MCF 10A (cell line): ENCODE measurements at regions of chr4 and their contacts with region 1.

Region 1: DNA sequence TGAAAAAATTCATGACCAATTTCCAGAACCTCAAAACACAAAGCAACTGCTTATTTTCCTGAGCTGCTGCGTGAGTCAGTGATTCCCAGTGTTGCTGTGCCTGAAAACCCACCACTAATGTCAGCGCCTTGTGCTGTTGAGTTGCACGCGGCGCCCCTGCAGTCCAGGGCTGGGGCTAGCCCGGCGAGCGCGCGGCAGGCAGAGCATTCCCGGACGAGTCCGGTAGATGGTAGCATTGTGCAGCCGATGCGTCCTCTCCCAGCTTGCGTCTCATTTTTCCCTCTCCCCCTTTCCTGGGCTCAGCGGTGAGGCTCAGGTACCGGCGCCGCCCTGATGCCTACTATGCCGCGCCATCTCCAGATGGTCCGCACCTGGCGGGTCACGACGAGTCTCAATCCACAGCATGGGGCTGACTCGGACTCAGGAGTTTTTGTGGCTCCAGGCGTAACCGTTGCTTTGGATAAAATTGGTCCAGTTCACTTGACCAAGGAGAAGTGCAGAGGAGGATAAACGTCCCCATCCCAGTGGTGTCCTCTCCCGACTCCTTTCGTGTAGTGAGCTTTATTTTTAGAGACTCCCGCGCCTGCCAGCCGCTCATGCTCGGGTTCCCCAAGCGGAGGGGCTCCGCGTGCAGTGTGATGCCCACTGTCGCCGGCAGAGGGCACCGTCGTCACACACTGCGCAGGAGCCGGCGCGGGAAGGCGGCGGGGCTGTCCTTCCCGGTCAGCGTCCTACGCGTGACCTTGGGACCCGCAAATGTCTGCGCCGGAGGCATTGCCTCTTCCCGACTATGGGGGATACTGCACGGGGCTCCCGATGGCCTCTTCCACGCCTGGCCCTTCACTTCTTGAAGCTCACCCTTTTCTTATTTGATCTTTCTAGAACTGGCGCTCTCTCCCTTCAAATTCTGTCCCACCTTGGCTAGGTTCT is 53.6 kb upstream of the IGFBP7 start:
- DNase-seq: peak; percentile 86
- H3K4me3 Mint-ChIP-seq: peak overlapping the region; percentile 91
- H3K27ac Mint-ChIP-seq: peak overlapping the region; percentile 82
- H3K4me1 Mint-ChIP-seq: peaks cover 15% of the 10 kb centered on the region
- H3K27me3 Mint-ChIP-seq: no peaks in the 10 kb centered on the region
- CTCF ChIP-seq: peak; percentile 88

Region 2: DNA sequence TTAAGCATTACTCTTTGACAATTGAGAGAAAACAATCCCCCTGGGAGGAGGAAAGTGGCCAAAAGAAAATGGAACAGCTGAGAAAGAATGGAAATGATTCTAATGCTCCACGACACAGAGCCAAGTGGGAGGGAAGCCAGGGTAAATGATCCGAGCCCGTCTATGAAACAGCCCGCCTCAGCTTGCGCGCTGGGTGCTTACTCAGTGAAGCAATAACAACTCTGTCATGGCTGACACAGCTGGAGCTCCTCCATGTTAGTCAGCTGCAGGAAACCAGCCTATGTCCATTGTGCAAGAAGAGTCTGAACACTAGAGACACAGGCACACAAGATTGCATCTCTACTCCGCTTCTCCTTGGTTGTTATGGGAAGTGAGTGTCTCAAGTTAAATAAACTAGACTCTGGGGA is 205.7 kb before region 1 on chr4:
- CTCF ChIA-PET with region 1: no interaction called
- POLR2A ChIA-PET with region 1: no interaction called
- intact Hi-C with region 1: no loop called
- DNase-seq: peak; percentile 93
- H3K4me3 Mint-ChIP-seq: peak overlapping the region; percentile 36
- H3K27ac Mint-ChIP-seq: peak overlapping the region; percentile 50
- H3K4me1 Mint-ChIP-seq: peaks cover 9% of the 10 kb centered on the region
- H3K27me3 Mint-ChIP-seq: no peaks in the 10 kb centered on the region
- CTCF ChIP-seq: no peak

Region 3: GRCh38 chr4:57064811-57065711 is 98.7 kb before region 1 on chr4:
- CTCF ChIA-PET with region 1: interaction called, 14 read pairs
- POLR2A ChIA-PET with region 1: no interaction called
- intact Hi-C with region 1: no loop called
- DNase-seq: peak; percentile 80
- H3K4me3 Mint-ChIP-seq: no peak overlapping the region
- H3K27ac Mint-ChIP-seq: peak overlapping the region; percentile 21
- H3K4me1 Mint-ChIP-seq: peaks cover 16% of the 10 kb centered on the region
- H3K27me3 Mint-ChIP-seq: no peaks in the 10 kb centered on the region
- CTCF ChIP-seq: no peak

Region 4: GRCh38 chr4:57182132-57182874 is 18.5 kb after region 1 on chr4:
- CTCF ChIA-PET with region 1: interaction called, 13 read pairs
- POLR2A ChIA-PET with region 1: no interaction called
- intact Hi-C with region 1: no loop called
- DNase-seq: no peak
- H3K4me3 Mint-ChIP-seq: no peak overlapping the region
- H3K27ac Mint-ChIP-seq: no peak overlapping the region
- H3K4me1 Mint-ChIP-seq: peaks cover 6% of the 10 kb centered on the region
- H3K27me3 Mint-ChIP-seq: no peaks in the 10 kb centered on the region
- CTCF ChIP-seq: no peak

Region 5: GRCh38 chr4:57405385-57405784 is 241.6 kb after region 1 on chr4:
- CTCF ChIA-PET with region 1: interaction called, 40 read pairs
- POLR2A ChIA-PET with region 1: interaction called, 4 read pairs
- intact Hi-C with region 1: no loop called
- DNase-seq: peak; percentile 70
- H3K4me3 Mint-ChIP-seq: no peak overlapping the region
- H3K27ac Mint-ChIP-seq: peak overlapping the region; percentile 74
- H3K4me1 Mint-ChIP-seq: peaks cover 24% of the 10 kb centered on the region
- H3K27me3 Mint-ChIP-seq: no peaks in the 10 kb centered on the region
- CTCF ChIP-seq: no peak

Region 6: DNA sequence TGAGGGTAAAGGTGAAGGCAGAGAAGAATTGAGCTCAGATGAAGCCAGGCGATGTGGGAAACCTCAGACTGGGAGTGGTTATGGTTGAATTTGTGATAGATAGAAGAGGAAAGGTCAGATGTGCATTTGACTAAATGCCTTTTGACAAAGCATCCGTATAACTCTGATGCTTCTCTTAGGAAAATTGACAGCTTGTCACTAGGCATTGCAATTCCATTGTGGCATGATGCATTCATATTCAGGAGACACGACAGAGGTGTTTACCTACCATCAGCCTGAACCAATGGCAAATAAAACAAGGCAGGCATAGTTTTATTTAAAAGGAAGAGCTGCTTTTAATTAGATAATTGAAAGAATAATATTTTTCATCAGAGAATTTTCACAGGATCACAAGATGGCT is 271.5 kb after region 1 on chr4:
- CTCF ChIA-PET with region 1: interaction called, 69 read pairs
- POLR2A ChIA-PET with region 1: no interaction called
- intact Hi-C with region 1: loop called (anchors 5 kb)
- DNase-seq: no peak
- H3K4me3 Mint-ChIP-seq: no peak overlapping the region
- H3K27ac Mint-ChIP-seq: no peak overlapping the region
- H3K4me1 Mint-ChIP-seq: no peaks in the 10 kb centered on the region
- H3K27me3 Mint-ChIP-seq: no peaks in the 10 kb centered on the region
- CTCF ChIP-seq: no peak

Region 7: GRCh38 chr4:57553728-57554127 is 389.9 kb after region 1 on chr4:
- CTCF ChIA-PET with region 1: no interaction called
- POLR2A ChIA-PET with region 1: no interaction called
- intact Hi-C with region 1: no loop called
- DNase-seq: no peak
- H3K4me3 Mint-ChIP-seq: no peak overlapping the region
- H3K27ac Mint-ChIP-seq: no peak overlapping the region
- H3K4me1 Mint-ChIP-seq: no peaks in the 10 kb centered on the region
- H3K27me3 Mint-ChIP-seq: no peaks in the 10 kb centered on the region
- CTCF ChIP-seq: no peak

Region 8: DNA sequence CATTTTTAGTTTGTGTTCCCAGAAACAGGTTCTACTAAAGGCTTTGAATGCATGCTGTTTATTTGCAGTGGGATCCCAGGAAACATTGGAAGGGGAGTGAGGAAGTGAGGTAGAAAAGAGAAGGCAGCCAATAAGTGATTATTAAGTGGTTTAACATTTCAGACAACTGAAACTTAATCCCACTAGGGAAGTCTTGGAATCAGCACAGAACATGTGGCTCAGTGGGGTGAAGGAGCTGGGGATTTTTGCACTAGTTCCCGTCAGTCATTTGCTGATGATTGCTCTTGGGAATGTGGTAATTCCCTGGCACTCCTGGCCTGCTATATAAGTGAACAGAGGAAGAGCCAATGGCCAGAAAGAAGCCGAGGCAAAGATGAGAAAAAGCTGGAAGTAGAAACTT is 999.4 kb after region 1 on chr4:
- CTCF ChIA-PET with region 1: interaction called, 11 read pairs
- POLR2A ChIA-PET with region 1: no interaction called
- intact Hi-C with region 1: no loop called
- DNase-seq: peak; percentile 5
- H3K4me3 Mint-ChIP-seq: no peak overlapping the region
- H3K27ac Mint-ChIP-seq: no peak overlapping the region
- H3K4me1 Mint-ChIP-seq: peaks cover 6% of the 10 kb centered on the region
- H3K27me3 Mint-ChIP-seq: no peaks in the 10 kb centered on the region
- CTCF ChIP-seq: no peak